RWPE1 (cell line): ENCODE measurements at regions of chr6 and their contacts with region 1.

Region 1: DNA sequence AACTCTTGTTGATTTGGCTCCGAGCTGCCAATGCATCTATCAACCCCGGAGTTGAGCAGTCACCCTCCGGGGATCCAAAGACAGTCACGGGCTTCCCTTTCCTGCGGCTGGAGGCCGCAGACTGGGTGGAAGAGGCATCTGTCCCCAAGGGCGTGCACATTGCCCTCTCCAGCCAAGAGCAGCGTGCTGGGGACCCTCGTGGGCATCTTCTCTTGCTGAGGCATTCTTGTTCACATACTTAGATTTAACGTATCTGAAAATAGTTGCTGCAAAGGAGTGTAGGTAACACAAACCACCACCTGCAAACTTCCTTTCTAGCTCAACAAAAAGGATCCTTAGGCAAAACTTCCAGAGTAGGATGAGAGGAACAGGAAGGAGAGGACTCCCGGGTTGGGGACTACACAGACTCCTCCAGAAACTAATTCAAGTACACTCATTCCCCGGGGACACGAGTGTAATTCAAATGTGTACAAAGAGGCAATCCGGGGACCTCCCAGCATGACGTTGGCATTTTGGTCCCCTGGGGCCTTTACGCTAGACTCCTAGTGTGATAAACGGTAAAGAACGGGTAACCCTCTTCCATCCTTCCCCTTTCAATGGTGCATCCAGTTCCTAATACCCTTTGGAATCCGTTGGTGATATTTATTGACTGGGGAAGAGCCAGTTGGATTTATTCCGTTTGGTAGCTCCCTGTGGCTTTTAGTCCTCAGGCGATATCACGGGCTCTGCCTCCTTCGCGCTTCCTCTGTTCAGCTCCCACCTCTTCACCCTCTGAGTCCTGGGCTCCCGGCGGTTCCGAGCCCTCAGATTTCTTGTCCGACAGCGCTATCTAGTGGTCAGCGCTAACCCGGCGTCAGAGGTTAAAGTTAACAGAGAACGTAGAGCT is 2.7 kb upstream of the COL12A1 start:
- DNase-seq: peak; percentile 72
- H3K27ac ChIP-seq: no peak overlapping the region
- CTCF ChIP-seq: peak; percentile 85

Region 2: DNA sequence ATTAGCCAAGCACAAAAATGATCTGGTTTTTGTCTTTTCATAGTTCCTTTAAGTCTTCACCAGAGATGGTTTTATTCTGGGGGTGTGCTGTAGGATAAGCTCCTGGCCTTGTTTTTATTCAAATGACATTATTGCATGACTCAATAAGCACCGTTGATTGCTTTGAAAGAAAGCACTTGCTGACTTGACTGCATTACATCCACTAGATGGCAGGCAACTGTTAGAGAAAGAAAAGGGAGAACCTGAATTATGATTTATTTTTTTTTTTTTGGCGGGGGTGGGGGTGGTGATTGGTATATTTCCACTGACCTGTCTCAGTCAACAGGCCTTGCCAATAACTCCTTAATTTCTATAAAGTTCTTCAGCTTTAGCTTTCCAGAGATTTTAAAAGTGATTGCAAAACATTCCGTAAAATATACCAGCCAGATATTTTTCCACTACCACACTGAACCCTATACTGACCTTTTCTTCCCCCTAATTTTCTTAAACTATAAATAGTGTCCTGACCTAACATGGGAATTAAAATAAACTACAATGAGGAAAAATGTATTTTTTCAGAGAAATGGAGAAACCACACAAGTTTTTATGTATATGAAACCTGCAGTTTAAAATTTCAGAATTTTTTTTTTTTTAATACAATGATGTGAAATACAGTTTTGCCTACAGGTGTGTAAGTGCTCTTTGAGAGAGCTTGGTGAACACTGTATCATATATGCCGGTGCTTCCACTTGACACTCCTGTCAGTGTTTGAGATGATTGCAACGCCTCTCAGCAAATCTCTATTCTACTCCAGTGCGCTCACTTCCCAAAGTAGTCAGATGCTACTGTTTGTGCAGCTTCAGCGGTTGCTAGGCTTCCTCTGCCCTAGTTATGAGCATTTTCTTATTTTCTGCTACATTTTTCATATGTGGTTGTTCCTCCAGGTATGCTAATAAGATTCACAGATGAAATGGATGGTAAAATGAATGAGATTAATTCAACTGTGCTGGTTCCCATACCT is 1238.3 kb before region 1 on chr6:
- CTCF ChIA-PET with region 1: interaction called, 11 read pairs
- POLR2A ChIA-PET with region 1: no interaction called
- DNase-seq: peak; percentile 57
- H3K27ac ChIP-seq: no peak overlapping the region
- CTCF ChIP-seq: peak; percentile 86

Region 3: DNA sequence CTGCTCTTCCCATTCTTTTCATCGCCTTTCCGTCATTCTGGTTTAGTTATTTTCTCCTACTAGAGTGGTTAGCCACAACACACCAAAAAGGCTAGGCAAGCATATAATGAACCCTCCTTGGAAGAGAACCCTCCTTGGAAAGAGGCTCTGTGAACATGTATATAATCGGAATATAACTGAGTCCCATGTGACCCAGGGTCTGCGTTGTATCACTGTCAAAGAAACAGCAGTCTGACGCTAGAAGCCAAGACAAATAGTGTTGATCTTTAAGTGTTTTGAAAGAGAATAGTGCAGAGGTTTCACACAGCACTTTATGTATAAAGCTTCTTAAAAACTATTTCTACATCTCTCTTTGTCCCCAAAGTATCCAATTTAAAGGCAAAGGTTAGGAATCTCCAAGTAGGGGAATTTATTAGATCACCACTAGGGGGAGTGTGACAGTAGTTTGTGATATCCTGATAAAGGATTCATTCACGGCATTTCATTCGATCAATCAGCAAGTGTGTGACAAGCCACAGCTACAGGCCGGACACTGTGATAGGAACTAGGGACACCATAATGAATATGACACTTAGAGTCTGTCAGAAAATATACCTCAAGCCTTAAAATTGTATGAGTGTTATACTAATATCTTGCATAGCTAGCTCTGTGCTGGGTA is 1117.3 kb before region 1 on chr6:
- CTCF ChIA-PET with region 1: interaction called, 11 read pairs
- POLR2A ChIA-PET with region 1: no interaction called
- DNase-seq: peak; percentile 45
- H3K27ac ChIP-seq: no peak overlapping the region
- CTCF ChIP-seq: peak; percentile 83

Region 4: DNA sequence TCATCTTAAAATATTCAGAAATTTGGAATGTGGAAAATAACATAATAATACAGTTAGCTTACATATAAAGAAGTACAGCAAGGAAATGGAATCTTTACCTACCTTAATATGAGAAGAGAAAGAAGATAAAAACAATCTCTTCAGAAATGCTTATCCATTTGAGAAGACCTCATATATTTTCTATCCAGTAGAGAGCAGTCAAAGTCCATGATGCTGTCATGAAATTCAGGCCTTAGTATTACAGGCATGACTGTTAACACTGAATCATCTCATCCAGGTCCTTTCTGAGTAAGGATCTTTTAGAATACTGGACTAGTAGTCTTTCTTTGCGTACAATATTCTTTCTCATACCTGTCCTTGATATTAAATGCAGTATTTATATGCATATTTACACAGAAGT is 799.1 kb before region 1 on chr6:
- CTCF ChIA-PET with region 1: interaction called, 27 read pairs
- POLR2A ChIA-PET with region 1: no interaction called
- DNase-seq: peak; percentile 33
- H3K27ac ChIP-seq: no peak overlapping the region
- CTCF ChIP-seq: peak; percentile 64